Naive thymus-derived CD4-positive, alpha-beta T cell (primary cell): ENCODE measurements at regions of chr6 and their contacts with region 1.

Region 1: DNA sequence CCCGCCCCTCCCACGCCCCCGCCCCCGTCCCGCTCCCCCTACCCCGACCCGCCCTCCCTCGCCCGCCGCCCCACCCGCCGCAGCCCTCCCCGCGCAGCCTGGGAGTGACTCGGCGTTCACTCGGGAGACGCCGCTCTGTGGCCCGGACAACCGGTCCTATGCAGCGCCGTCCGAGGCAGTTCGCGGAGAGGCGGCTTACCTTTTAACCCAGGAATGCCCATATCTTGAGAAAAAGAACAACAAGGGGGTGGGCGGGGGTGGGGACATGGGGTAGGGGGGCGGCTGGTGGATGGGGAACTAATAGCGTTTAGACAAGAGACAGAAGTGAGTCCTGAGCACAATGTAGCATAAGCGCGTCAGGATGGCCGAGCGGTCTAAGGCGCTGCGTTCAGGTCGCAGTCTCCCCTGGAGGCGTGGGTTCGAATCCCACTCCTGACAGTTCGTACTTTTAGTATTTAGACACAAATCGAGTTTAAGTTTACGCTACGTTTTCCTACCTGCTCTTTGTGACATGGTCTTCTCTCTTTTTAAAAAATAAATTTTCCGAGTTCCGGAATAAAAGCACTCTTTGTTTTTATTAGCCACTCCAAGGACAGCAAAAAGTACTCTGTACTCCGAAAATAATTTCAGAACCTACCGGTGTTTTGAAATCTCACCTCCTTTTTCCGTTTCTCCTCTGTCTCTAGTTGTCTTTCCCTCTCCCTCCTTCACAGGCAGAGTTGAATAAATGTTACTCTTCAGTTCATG is 17.1 kb upstream of the HMGN4 start:
- DNase-seq: peak; percentile 74 to 90 (median 87)
- ATAC-seq: peak; percentile 84
- H3K4me3 ChIP-seq: peak overlapping the region; percentile 61
- H3K4me3 Mint-ChIP-seq: peak overlapping the region; percentile 73 to 100 (median 91)
- H3K27ac ChIP-seq: peak overlapping the region; percentile 69
- H3K27ac Mint-ChIP-seq: peak overlapping the region; percentile 91 to 98 (median 97)
- H3K4me1 ChIP-seq: peaks cover 8 to 15% of the 10 kb centered on the region in 2 donors
- H3K4me1 Mint-ChIP-seq: peaks cover 6 to 42% (median 35%) of the 10 kb centered on the region in 7 donors
- H3K27me3 ChIP-seq: no peaks in the 10 kb centered on the region
- H3K27me3 Mint-ChIP-seq: peaks cover 0 to 6% (median 0%) of the 10 kb centered on the region in 5 donors

Region 2: GRCh38 chr6:25670793-25671513 is 850.1 kb before region 1 on chr6:
- CTCF ChIA-PET with region 1: no interaction called
- POLR2A ChIA-PET with region 1: no interaction called
- intact Hi-C with region 1: no loop called
- DNase-seq: no peak
- ATAC-seq: no peak
- H3K4me3 ChIP-seq: no peak overlapping the region
- H3K4me3 Mint-ChIP-seq: no peak overlapping the region
- H3K27ac ChIP-seq: no peak overlapping the region
- H3K27ac Mint-ChIP-seq: no peak overlapping the region
- H3K4me1 ChIP-seq: no peaks in the 10 kb centered on the region
- H3K4me1 Mint-ChIP-seq: peaks cover 0 to 2% (median 0%) of the 10 kb centered on the region in 7 donors
- H3K27me3 ChIP-seq: no peaks in the 10 kb centered on the region
- H3K27me3 Mint-ChIP-seq: peaks cover 8 to 24% (median 10%) of the 10 kb centered on the region in 5 donors

Region 3: DNA sequence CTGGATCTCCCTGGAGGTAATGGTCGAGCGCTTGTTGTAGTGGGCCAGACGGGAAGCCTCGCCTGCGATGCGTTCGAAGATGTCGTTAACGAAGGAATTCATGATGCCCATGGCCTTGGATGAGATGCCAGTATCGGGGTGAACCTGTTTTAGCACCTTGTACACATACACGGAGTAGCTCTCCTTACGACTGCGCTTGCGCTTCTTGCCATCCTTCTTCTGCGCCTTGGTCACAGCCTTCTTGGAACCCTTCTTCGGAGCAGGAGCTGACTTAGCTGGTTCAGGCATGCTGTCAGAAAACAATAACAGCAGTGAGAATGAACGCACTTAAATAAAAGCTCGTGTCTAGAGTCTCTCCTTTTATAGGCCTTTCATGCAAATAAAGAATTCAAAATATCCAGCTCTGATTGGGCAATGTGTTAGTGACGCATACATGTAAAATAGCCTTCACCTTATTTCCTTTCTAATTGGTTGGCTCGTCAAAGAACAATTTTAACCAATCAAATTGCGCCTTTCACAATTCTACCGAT is 304.6 kb before region 1 on chr6:
- CTCF ChIA-PET with region 1: no interaction called
- POLR2A ChIA-PET with region 1: no interaction called
- intact Hi-C with region 1: no loop called
- DNase-seq: peak; percentile 56 to 97 (median 93)
- ATAC-seq: peak; percentile 86
- H3K4me3 ChIP-seq: peak overlapping the region; percentile 72
- H3K4me3 Mint-ChIP-seq: no peak overlapping the region
- H3K27ac ChIP-seq: peak overlapping the region; percentile 84
- H3K27ac Mint-ChIP-seq: no peak overlapping the region
- H3K4me1 ChIP-seq: peaks cover 12 to 18% of the 10 kb centered on the region in 2 donors
- H3K4me1 Mint-ChIP-seq: peaks cover 3 to 31% (median 10%) of the 10 kb centered on the region in 7 donors
- H3K27me3 ChIP-seq: no peaks in the 10 kb centered on the region
- H3K27me3 Mint-ChIP-seq: no peaks in the 10 kb centered on the region

Region 4: DNA sequence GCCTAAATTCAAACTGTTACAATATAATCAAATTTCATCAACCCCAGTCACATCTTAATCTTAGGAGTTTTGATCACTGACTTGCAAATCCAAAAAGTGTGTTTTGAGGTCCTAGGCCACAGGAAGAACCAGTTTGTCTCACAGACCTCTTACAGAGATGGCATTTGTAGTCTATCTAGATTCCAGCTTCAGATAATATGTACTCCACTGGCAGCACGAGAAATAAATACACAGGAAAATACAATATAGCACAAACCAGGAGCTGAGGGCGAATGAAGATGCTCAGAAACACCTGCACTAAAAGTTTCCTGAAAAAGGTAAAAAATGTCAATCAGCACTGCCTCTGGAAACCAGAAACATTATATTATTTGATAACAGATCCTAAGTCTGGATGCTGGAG is 81.4 kb before region 1 on chr6:
- CTCF ChIA-PET with region 1: no interaction called
- POLR2A ChIA-PET with region 1: no interaction called
- intact Hi-C with region 1: loop called in 1 of 2 experiments (anchors 1 kb)
- DNase-seq: peak in 3 of 9 donors; percentile 7 to 35 (median 15)
- ATAC-seq: no peak
- H3K4me3 ChIP-seq: peak overlapping the region; percentile 94
- H3K4me3 Mint-ChIP-seq: peak overlapping the region; percentile 89 to 100 (median 98)
- H3K27ac ChIP-seq: peak overlapping the region; percentile 99
- H3K27ac Mint-ChIP-seq: peak overlapping the region; percentile 95 to 100 (median 99)
- H3K4me1 ChIP-seq: peaks cover 16 to 19% of the 10 kb centered on the region in 2 donors
- H3K4me1 Mint-ChIP-seq: peaks cover 27 to 52% (median 41%) of the 10 kb centered on the region in 7 donors
- H3K27me3 ChIP-seq: no peaks in the 10 kb centered on the region
- H3K27me3 Mint-ChIP-seq: no peaks in the 10 kb centered on the region

Region 5: DNA sequence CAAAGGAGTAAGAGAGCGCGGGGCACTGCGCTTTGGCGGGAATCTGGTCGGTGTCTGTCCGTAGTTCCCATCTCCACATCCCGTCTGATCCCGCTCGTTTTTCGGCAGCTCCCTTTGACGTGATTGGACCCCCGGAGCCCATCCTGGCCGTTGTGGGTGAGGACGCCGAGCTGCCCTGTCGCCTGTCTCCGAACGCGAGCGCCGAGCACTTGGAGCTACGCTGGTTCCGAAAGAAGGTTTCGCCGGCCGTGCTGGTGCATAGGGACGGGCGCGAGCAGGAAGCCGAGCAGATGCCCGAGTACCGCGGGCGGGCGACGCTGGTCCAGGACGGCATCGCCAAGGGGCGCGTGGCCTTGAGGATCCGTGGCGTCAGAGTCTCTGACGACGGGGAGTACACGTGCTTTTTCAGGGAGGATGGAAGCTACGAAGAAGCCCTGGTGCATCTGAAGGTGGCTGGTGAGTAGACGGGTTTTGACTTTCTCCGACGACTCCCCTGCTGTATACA is 19.5 kb before region 1 on chr6:
- CTCF ChIA-PET with region 1: no interaction called
- POLR2A ChIA-PET with region 1: interaction called, 3 read pairs
- intact Hi-C with region 1: loop called in 1 of 2 experiments (anchors 1 kb)
- DNase-seq: peak in 8 of 9 donors; percentile 25 to 39 (median 33)
- ATAC-seq: peak; percentile 79
- H3K4me3 ChIP-seq: peak overlapping the region; percentile 51
- H3K4me3 Mint-ChIP-seq: peak overlapping the region; percentile 63 to 87 (median 84)
- H3K27ac ChIP-seq: no peak overlapping the region
- H3K27ac Mint-ChIP-seq: peak overlapping the region in 7 of 9 donors; percentile 5 to 41 (median 25)
- H3K4me1 ChIP-seq: peaks cover 10% of the 10 kb centered on the region in 2 donors
- H3K4me1 Mint-ChIP-seq: peaks cover 10 to 22% (median 17%) of the 10 kb centered on the region in 7 donors
- H3K27me3 ChIP-seq: peaks cover 13 to 15% of the 10 kb centered on the region in 2 donors
- H3K27me3 Mint-ChIP-seq: peaks cover 11 to 48% (median 27%) of the 10 kb centered on the region in 5 donors

Region 6: DNA sequence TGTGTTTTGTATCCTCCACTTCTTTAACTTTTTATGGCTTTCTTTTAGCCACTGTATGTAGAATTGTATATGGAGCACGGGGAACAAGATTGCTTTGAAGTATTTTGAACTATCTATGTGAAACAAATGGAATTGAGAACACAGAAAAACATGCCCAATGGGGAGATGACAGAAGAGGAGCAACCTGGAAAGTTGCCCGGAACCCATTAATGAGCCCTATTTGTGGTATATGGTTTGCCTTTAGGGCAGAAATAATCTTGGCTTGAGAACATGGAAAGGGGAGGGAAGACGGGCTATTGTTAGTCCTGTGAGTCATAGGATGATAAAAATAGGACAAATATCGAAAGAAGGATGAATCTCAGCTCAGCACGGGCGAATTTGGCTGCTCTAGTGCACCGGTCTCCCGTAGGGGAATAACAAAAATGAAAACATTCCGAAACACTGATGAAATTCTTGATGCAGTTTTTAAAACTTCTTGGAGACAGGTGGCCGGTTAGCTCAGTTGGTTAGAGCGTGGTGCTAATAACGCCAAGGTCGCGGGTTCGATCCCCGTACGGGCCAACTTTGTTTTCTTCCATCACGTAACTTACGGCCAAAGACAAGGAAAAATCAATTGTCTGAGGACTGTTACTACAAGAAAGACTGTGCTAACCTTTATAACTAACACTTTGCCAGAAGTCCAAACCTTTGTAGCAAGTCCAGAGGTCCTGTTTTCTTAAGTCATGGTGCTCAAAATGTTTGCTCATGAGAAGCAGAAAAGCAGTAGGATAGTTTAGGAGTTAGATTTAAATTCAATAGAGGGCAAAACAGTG is 32.8 kb after region 1 on chr6:
- CTCF ChIA-PET with region 1: no interaction called
- POLR2A ChIA-PET with region 1: interaction called, 5 read pairs
- intact Hi-C with region 1: loop called (anchors 1 kb)
- DNase-seq: peak; percentile 44 to 86 (median 83)
- ATAC-seq: peak; percentile 66
- H3K4me3 ChIP-seq: peak overlapping the region; percentile 75
- H3K4me3 Mint-ChIP-seq: no peak overlapping the region
- H3K27ac ChIP-seq: peak overlapping the region; percentile 65
- H3K27ac Mint-ChIP-seq: no peak overlapping the region
- H3K4me1 ChIP-seq: peaks cover 7 to 18% of the 10 kb centered on the region in 2 donors
- H3K4me1 Mint-ChIP-seq: peaks cover 12 to 35% (median 24%) of the 10 kb centered on the region in 7 donors
- H3K27me3 ChIP-seq: no peaks in the 10 kb centered on the region
- H3K27me3 Mint-ChIP-seq: peaks cover 0 to 2% (median 0%) of the 10 kb centered on the region in 5 donors

Region 7: DNA sequence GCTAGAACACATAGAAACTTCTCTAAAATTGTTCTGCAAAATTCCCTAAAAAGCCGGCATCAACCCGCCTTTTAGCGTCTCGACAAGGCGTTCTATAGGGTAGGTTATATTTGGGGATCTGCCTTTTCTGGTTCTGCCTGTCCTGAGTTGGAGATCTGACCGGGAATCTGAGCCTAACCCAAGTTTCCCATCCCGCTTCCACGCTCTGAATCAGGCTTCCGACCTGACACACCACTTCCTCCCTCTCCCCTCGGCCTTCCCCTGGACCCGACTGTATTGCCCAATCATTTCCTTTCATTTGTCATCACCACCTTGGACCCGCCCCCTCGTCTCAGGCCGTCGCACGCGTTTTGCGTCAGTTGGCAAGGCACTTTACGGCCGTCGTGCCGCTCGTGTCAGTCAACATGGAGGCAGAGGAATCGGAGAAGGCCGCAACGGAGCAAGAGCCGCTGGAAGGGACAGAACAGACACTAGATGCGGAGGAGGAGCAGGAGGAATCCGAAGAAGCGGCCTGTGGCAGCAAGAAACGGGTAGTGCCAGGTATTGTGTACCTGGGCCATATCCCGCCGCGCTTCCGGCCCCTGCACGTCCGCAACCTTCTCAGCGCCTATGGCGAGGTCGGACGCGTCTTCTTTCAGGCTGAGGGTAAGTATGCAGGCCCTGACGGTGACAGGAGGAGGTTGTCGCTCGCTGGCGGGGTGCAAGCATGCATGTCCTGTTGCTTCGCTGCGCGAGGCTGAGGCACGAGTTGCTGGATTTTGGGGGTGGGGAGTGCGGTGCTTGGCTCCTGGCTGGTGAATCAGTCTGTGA is 75.8 kb after region 1 on chr6 and contains the start of gene ABT1:
- CTCF ChIA-PET with region 1: no interaction called
- POLR2A ChIA-PET with region 1: no interaction called
- intact Hi-C with region 1: loop called in 1 of 2 experiments (anchors 1 kb)
- DNase-seq: peak; percentile 87 to 96 (median 95)
- ATAC-seq: peak; percentile 95
- H3K4me3 ChIP-seq: peak within 1 kb of the TSS; percentile 81
- H3K4me3 Mint-ChIP-seq: no peak within 1 kb of the TSS
- H3K27ac ChIP-seq: peak within 1 kb of the TSS; percentile 89
- H3K27ac Mint-ChIP-seq: peak within 1 kb of the TSS in 1 of 9 donors; percentile 92
- H3K4me1 ChIP-seq: peaks cover 17 to 22% of the 10 kb centered on the region in 2 donors
- H3K4me1 Mint-ChIP-seq: peaks cover 5 to 20% (median 10%) of the 10 kb centered on the region in 7 donors
- H3K27me3 ChIP-seq: peaks cover 8 to 14% of the 10 kb centered on the region in 2 donors
- H3K27me3 Mint-ChIP-seq: peaks cover 3 to 28% (median 16%) of the 10 kb centered on the region in 5 donors
- total RNA-seq, gene ABT1: 23.3 to 37.5 (median 35.0) TPM

Region 8: GRCh38 chr6:26613689-26614683 is 93.0 kb after region 1 on chr6:
- CTCF ChIA-PET with region 1: no interaction called
- POLR2A ChIA-PET with region 1: no interaction called
- intact Hi-C with region 1: no loop called
- DNase-seq: peak in 4 of 9 donors; percentile 31 to 41 (median 34)
- ATAC-seq: peak; percentile 37
- H3K4me3 ChIP-seq: peak overlapping the region; percentile 67
- H3K4me3 Mint-ChIP-seq: peak overlapping the region; percentile 75 to 93 (median 86)
- H3K27ac ChIP-seq: no peak overlapping the region
- H3K27ac Mint-ChIP-seq: peak overlapping the region in 4 of 9 donors; percentile 60 to 87 (median 72)
- H3K4me1 ChIP-seq: peaks cover 0 to 15% of the 10 kb centered on the region in 2 donors
- H3K4me1 Mint-ChIP-seq: peaks cover 10 to 30% (median 24%) of the 10 kb centered on the region in 7 donors
- H3K27me3 ChIP-seq: peaks cover 7 to 10% of the 10 kb centered on the region in 2 donors
- H3K27me3 Mint-ChIP-seq: peaks cover 10 to 57% (median 32%) of the 10 kb centered on the region in 5 donors